ENCODE measurements at regions of chr7 and their contacts with region 1.

Region 1: DNA sequence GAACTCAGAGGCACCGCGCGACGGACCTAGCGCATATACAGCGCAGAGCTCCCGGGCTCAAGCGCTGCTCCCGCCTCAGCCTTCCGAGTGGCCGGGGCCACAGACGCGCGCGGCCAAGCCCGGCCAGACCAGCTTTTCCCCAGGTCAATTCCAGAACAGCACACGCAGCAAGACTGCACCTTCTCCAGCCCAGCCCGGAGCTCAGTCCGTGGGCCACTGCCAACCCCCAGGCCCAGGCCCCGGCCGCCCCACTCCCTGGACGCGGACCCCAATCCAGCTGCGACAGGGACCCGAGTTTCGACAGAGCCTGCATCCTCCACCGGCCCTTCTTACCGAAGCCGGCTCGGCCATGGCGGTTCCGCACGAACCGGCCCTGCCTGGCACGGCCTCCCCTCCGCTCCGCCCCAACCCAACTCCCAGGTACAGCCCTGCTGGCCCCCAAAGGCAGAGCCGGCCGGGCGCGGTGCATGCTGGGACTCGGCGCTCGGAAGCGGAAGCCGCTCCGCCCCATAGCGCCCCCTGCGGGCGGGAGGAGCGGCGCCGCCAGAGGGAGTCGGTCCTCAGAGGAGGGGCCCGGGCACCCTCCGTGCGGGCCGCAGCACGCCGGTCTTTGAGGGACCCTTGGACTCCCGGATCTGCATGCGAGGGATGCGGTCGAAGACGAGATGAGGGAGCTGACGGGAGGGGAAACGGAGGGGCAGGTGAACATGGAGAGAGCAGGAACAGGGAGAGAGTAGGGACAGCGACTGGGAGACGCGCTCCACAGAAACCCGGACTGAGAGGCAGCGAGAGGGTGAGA is at the start of gene ZNF425:
- DNase-seq: peak; percentile 99
- H3K4me3 Mint-ChIP-seq: peak within 1 kb of the TSS; percentile 90
- H3K27ac Mint-ChIP-seq: peak within 1 kb of the TSS; percentile 98
- H3K4me1 Mint-ChIP-seq: peaks cover 18% of the 10 kb centered on the region
- H3K27me3 Mint-ChIP-seq: no peaks in the 10 kb centered on the region
- total RNA-seq, gene ZNF425: 0.44 and 0.92 TPM in 2 replicates

Region 2: GRCh38 chr7:149067876-149068275 is 58.2 kb before region 1 on chr7:
- intact Hi-C with region 1: loop called (anchors 2 kb)
- DNase-seq: no peak
- H3K4me3 Mint-ChIP-seq: no peak overlapping the region
- H3K27ac Mint-ChIP-seq: no peak overlapping the region
- H3K4me1 Mint-ChIP-seq: peaks cover 9% of the 10 kb centered on the region
- H3K27me3 Mint-ChIP-seq: no peaks in the 10 kb centered on the region

Region 3: GRCh38 chr7:149147072-149147751 is 21.1 kb after region 1 on chr7 and contains the start of gene ZNF398:
- intact Hi-C with region 1: loop called (anchors 1 kb)
- DNase-seq: peak; percentile 93
- H3K4me3 Mint-ChIP-seq: peak within 1 kb of the TSS; percentile 93
- H3K27ac Mint-ChIP-seq: peak within 1 kb of the TSS; percentile 93
- H3K4me1 Mint-ChIP-seq: peaks cover 26% of the 10 kb centered on the region
- H3K27me3 Mint-ChIP-seq: no peaks in the 10 kb centered on the region
- total RNA-seq, gene ZNF398: 11.7 and 14.2 TPM in 2 replicates

Region 4: GRCh38 chr7:149195180-149196150 is 69.4 kb after region 1 on chr7 and contains the start of gene ZNF282:
- intact Hi-C with region 1: loop called (anchors 1 kb)
- DNase-seq: peak; percentile 94
- H3K4me3 Mint-ChIP-seq: peak within 1 kb of the TSS; percentile 96
- H3K27ac Mint-ChIP-seq: peak within 1 kb of the TSS; percentile 96
- H3K4me1 Mint-ChIP-seq: peaks cover 38% of the 10 kb centered on the region
- H3K27me3 Mint-ChIP-seq: peaks cover 4% of the 10 kb centered on the region
- total RNA-seq, gene ZNF282: 44.7 and 49.9 TPM in 2 replicates

Region 5: GRCh38 chr7:149261829-149262617 is 136.0 kb after region 1 on chr7 and contains the start of gene ZNF783:
- intact Hi-C with region 1: loop called (anchors 10 kb)
- DNase-seq: peak; percentile 96
- H3K4me3 Mint-ChIP-seq: peak within 1 kb of the TSS; percentile 85
- H3K27ac Mint-ChIP-seq: peak within 1 kb of the TSS; percentile 97
- H3K4me1 Mint-ChIP-seq: peaks cover 22% of the 10 kb centered on the region
- H3K27me3 Mint-ChIP-seq: no peaks in the 10 kb centered on the region
- total RNA-seq, gene ZNF783: 27.2 and 27.4 TPM in 2 replicates

Region 6: DNA sequence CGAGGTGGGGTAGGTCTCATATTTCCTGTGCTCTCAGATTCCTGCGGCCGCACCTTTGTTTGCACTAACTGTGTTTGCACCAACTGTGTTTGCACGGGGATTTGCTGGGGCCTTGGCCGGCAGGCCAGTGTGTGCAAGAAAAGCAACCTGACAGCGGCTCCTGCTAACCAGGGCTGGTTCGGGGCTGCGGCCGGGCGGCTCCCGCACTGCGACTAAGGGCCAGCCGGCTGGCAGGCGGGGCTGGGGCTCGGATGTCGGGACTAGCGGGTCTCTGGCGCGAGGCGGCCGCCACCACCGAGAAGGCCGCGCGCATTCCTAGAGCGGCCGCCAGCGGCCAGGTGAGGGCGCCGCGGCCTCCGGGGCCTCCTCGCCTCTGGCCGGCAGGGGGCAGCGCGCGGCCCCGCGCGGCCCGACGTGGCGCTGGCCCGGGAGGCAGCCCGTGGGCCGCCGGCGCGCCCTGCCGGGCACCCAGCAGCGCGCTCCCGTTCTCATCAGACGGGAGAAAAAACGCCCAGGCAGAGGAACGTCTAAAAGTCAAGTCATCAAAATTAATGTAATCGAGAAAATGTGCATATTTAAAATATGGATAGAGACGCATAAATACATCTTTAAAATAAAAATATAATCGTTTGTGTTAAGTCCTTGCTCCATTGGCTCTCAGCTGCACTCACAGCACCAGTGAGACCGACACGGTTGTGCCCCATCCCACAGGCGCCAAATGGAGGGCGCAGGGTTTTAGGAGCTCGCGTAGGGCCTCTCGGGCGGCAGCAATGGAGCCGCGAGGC is 296.3 kb after region 1 on chr7:
- intact Hi-C with region 1: loop called (anchors 2 kb)
- DNase-seq: peak; percentile 94
- H3K4me3 Mint-ChIP-seq: peak overlapping the region; percentile 79
- H3K27ac Mint-ChIP-seq: peak overlapping the region; percentile 66
- H3K4me1 Mint-ChIP-seq: peaks cover 5% of the 10 kb centered on the region
- H3K27me3 Mint-ChIP-seq: peaks cover 6% of the 10 kb centered on the region

Region 7: GRCh38 chr7:149497456-149498261 is 371.6 kb after region 1 on chr7 and contains the start of gene ZNF746:
- intact Hi-C with region 1: loop called (anchors 5 kb)
- DNase-seq: peak; percentile 95
- H3K4me3 Mint-ChIP-seq: peak within 1 kb of the TSS; percentile 97
- H3K27ac Mint-ChIP-seq: peak within 1 kb of the TSS; percentile 96
- H3K4me1 Mint-ChIP-seq: peaks cover 19% of the 10 kb centered on the region
- H3K27me3 Mint-ChIP-seq: peaks cover 2% of the 10 kb centered on the region
- total RNA-seq, gene ZNF746: 23.3 and 24.8 TPM in 2 replicates

Region 8: GRCh38 chr7:149635561-149636329 is 509.7 kb after region 1 on chr7:
- intact Hi-C with region 1: no loop called
- DNase-seq: no peak
- H3K4me3 Mint-ChIP-seq: no peak overlapping the region
- H3K27ac Mint-ChIP-seq: no peak overlapping the region
- H3K4me1 Mint-ChIP-seq: no peaks in the 10 kb centered on the region
- H3K27me3 Mint-ChIP-seq: peaks cover 5% of the 10 kb centered on the region

Measured in activated CD4-positive, alpha-beta T cell treated with anti-CD3 and anti-CD28 coated beads, Interleukin-2, amount 10 ng/mL, durations not matched to agents 24 days and 14 days (primary cell).